ENCODE measurements at regions of chr5 and their contacts with region 1.

Region 1: DNA sequence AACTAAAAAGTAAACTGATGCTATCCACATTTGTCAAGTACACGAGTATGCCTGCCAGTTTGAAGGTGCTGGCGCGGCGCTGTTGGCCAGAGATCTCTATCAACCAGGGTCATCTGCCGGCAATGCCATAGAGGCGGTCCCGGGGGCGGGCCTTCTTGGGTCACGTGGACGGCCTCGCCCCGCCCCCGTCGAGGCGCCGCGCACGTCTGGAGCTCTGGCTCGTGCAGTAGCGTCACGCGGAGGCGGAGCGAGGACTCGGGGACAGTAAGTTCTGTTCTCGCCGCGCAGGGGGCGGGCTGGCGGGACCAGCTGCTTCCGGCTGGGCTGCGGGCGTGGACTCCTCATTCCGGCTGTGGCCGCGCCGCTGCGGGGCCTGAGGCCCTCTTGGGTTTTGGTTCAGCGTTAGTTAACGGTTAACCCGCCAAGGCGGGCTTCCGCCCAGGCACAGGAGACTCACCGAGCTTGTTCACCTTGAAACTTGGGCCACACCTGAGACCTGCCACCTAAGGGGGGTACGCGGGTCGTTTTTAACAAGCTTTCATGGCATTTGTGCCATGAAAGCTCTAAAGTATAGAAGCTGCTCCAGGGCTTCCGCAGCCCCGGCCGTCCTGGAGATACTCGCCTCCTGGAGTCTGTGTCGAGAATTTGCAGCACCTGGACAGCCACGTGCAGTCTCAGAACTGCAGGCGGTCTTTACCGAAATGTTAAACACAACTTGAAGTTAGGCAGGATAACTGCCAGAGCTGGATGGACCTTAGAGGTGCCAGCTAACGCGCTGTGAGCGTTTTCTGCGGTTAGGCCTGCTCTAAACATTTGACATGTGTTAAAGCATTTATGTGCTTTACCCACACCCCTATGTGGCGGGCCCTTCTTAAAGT is at the start of gene RFESD:
- DNase-seq: peak; percentile 99
- H3K4me3 Mint-ChIP-seq: peak within 1 kb of the TSS; percentile 83
- H3K27ac Mint-ChIP-seq: peak within 1 kb of the TSS; percentile 89
- H3K4me1 Mint-ChIP-seq: peaks cover 29% of the 10 kb centered on the region
- H3K27me3 Mint-ChIP-seq: no peaks in the 10 kb centered on the region
- total RNA-seq, gene RFESD: 4.0 and 4.2 TPM in 2 replicates

Region 2: GRCh38 chr5:95554647-95555548 is 91.9 kb before region 1 on chr5 and contains the starts of genes ARSK and SKIC3:
- intact Hi-C with region 1: loop called (anchors 1 kb)
- DNase-seq: peak; percentile 97
- H3K4me3 Mint-ChIP-seq: peak within 1 kb of the TSS; percentile 96
- H3K27ac Mint-ChIP-seq: peak within 1 kb of the TSS; percentile 94
- H3K4me1 Mint-ChIP-seq: peaks cover 40% of the 10 kb centered on the region
- H3K27me3 Mint-ChIP-seq: no peaks in the 10 kb centered on the region
- total RNA-seq, gene ARSK: 3.2 and 4.1 TPM in 2 replicates
- total RNA-seq, gene SKIC3: 61.2 and 69.5 TPM in 2 replicates

Region 3: DNA sequence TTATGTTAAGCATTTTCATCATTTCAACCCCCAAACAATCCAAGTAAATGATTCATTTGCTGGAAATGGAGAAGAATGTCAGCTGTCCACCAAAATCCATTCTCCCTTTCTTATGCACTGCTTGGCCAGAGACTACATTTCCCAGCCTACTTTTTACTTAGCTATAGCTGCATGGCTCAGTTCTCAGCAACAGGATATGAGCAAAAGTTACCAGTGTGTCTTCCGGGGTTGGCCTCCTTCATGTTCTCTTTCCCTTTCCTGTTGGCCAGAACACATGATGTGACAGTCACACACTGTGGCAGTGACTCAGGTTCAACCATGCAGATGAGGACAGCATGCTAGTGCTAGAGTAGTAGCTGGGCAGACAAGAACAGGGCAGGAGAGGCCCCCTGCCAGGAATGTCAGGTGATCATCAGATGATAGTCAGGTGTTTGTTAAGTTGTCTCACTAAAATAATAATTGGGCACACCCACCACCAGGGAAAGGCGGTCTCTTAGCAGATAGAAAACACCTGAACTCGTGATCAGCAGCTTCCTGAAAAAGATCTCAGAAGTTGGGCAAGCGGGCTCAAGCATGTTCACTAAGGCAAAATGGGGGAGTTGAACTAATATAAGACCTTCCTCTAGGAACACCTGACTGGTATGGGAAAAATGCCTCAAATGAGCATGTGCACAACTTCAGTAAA is 14.7 kb before region 1 on chr5:
- intact Hi-C with region 1: loop called (anchors 1 kb)
- DNase-seq: peak; percentile 88
- H3K4me3 Mint-ChIP-seq: peak overlapping the region; percentile 28
- H3K27ac Mint-ChIP-seq: peak overlapping the region; percentile 92
- H3K4me1 Mint-ChIP-seq: peaks cover 14% of the 10 kb centered on the region
- H3K27me3 Mint-ChIP-seq: peaks cover 9% of the 10 kb centered on the region

Region 4: DNA sequence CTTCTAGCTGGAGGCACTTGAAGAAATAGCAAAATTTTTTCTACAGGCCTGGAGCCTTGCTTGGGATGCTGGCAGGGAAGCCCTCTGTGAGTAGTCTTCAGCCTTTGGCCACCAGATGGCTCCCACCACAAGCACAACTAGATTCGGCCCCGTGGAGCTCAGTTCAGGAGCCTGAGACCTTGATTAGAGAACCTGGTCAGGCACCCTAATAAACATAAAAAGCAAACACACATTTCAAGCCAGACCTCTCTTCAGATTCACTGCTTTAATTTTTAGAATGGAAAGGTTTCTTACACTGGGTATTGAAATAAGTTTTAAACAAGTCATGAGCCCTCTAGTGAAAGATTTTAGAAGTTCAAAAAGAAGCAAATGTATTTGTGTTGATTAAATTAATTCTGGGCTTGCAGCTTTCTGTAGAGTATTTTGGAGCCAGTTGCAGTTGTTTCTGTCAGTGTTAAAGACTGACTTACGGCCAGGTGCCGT is 134.3 kb after region 1 on chr5:
- intact Hi-C with region 1: loop called (anchors 1 kb)
- DNase-seq: peak; percentile 90
- H3K4me3 Mint-ChIP-seq: peak overlapping the region; percentile 56
- H3K27ac Mint-ChIP-seq: no peak overlapping the region
- H3K4me1 Mint-ChIP-seq: peaks cover 16% of the 10 kb centered on the region
- H3K27me3 Mint-ChIP-seq: peaks cover 7% of the 10 kb centered on the region

Region 5: DNA sequence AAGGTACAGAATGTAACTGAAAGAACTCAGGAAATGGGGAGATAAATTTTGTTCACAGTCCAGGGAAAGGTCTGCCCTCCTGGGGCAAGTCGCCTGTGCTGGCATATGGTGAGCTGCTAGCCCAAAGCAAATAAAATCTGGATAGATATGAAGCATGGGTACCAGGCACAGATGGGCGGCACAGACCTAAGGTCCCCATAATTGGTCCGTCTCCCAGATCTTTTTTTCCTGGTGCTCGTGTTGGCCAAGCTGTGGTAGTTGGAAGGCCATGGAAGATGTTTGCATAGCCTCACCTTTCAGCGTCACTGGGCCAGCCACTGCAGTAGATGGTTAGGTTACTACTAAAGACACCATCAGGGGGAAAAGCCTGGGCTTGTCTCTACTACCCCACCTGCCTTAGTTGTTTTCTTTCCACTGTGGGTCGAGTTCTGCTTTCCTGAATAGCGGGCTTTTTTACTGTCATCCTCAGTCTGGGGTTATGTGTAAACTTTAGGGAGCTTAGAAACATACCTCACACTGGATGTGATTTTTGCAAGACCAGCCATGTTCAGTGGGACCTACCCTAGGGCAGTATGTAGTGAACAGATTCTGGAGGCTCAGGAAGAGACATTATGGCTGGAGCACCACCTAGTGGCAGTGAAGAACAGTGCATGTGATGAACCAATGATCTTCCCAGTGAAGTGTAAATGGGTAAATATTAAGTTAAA is 199.9 kb after region 1 on chr5:
- intact Hi-C with region 1: loop called (anchors 1 kb)
- DNase-seq: peak; percentile 90
- H3K4me3 Mint-ChIP-seq: no peak overlapping the region
- H3K27ac Mint-ChIP-seq: no peak overlapping the region
- H3K4me1 Mint-ChIP-seq: peaks cover 27% of the 10 kb centered on the region
- H3K27me3 Mint-ChIP-seq: peaks cover 16% of the 10 kb centered on the region

Region 6: GRCh38 chr5:95915999-95916686 is 269.4 kb after region 1 on chr5:
- intact Hi-C with region 1: no loop called
- DNase-seq: peak; percentile 57
- H3K4me3 Mint-ChIP-seq: peak overlapping the region; percentile 11
- H3K27ac Mint-ChIP-seq: peak overlapping the region; percentile 30
- H3K4me1 Mint-ChIP-seq: peaks cover 37% of the 10 kb centered on the region
- H3K27me3 Mint-ChIP-seq: no peaks in the 10 kb centered on the region

Region 7: GRCh38 chr5:96336351-96336985 is 689.7 kb after region 1 on chr5:
- intact Hi-C with region 1: loop called (anchors 10 kb)
- DNase-seq: peak; percentile 89
- H3K4me3 Mint-ChIP-seq: no peak overlapping the region
- H3K27ac Mint-ChIP-seq: no peak overlapping the region
- H3K4me1 Mint-ChIP-seq: peaks cover 13% of the 10 kb centered on the region
- H3K27me3 Mint-ChIP-seq: peaks cover 12% of the 10 kb centered on the region